ENCODE measurements at regions of chr4 and their contacts with region 1.

Region 1: GRCh38 chr4:1346781-1347409 is at the start of gene UVSSA:
- DNase-seq: peak; percentile 100
- ATAC-seq: peak; percentile 98
- H3K4me3 ChIP-seq: peak within 1 kb of the TSS; percentile 77 to 83
- H3K27ac ChIP-seq: peak within 1 kb of the TSS; percentile 91 to 97
- H3K4me1 ChIP-seq: no peaks in the 10 kb centered on the region
- H3K27me3 ChIP-seq: no peaks in the 10 kb centered on the region
- total RNA-seq, gene UVSSA: 19.9 to 33.5 TPM

Region 2: DNA sequence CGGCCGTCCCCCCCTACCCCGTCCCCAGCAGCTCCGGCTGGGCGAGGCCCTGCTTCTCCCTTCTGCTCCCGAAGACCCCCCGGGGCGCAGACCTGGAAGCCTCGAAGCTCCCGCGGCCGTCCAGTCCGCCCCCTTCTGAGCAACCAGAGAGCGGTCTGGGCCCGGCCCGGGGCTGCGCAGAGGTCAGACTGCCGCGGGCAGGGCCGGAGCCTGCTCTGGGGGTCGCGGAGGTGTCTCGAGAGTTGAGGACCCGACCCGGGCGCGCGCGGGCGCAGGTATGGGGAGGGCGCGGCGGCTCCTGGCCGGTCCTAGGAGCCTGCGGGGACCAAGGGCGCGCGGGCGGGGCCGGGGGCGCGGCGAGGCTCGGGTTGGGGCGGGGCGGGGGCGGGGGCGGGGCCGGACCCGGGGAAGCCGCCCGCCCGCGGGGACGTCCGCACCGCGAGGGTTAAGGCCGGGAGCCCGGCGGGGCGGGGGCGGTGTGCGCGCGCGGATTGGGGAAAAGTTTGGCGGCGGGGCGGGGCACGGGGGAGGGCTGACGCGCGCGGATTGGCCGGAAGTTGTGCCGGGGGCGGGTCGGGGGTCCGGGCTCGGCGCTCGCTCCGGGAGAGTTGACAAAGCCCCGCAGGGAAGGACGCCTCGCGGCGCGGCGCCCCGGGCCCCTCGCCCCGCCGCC is 335.7 kb before region 1 on chr4 and contains the start of gene FGFRL1:
- intact Hi-C with region 1: loop called in 1 of 2 experiments (anchors 2 kb)
- DNase-seq: peak; percentile 96 to 99
- ATAC-seq: peak; percentile 75
- H3K4me3 ChIP-seq: peak within 1 kb of the TSS; percentile 56 to 88
- H3K27ac ChIP-seq: peak within 1 kb of the TSS in 1 of 2 donors; percentile 6
- H3K4me1 ChIP-seq: no peaks in the 10 kb centered on the region
- H3K27me3 ChIP-seq: no peaks in the 10 kb centered on the region
- total RNA-seq, gene FGFRL1: 28.9 to 32.9 TPM

Region 3: GRCh38 chr4:1167247-1167949 is 179.5 kb before region 1 on chr4:
- intact Hi-C with region 1: loop called (anchors 10 kb)
- DNase-seq: peak; percentile 87 to 95
- ATAC-seq: peak; percentile 90
- H3K4me3 ChIP-seq: peak overlapping the region; percentile 17 to 45
- H3K27ac ChIP-seq: no peak overlapping the region
- H3K4me1 ChIP-seq: no peaks in the 10 kb centered on the region
- H3K27me3 ChIP-seq: no peaks in the 10 kb centered on the region

Region 4: GRCh38 chr4:1249148-1249730 is 97.7 kb before region 1 on chr4:
- intact Hi-C with region 1: loop called (anchors 1 to 2 kb)
- DNase-seq: peak; percentile 92 to 95
- ATAC-seq: peak; percentile 85
- H3K4me3 ChIP-seq: peak overlapping the region; percentile 74 to 86
- H3K27ac ChIP-seq: peak overlapping the region; percentile 76 to 84
- H3K4me1 ChIP-seq: peaks cover 0 to 3% of the 10 kb centered on the region in 2 donors
- H3K27me3 ChIP-seq: no peaks in the 10 kb centered on the region

Region 5: GRCh38 chr4:1289207-1290164 is 57.4 kb before region 1 on chr4 and contains the start of gene MAEA:
- intact Hi-C with region 1: loop called (anchors 2 to 5 kb)
- DNase-seq: peak; percentile 98 to 99
- ATAC-seq: peak; percentile 99
- H3K4me3 ChIP-seq: peak within 1 kb of the TSS; percentile 79 to 84
- H3K27ac ChIP-seq: peak within 1 kb of the TSS in 1 of 2 donors; percentile 32
- H3K4me1 ChIP-seq: peaks cover 0 to 3% of the 10 kb centered on the region in 2 donors
- H3K27me3 ChIP-seq: no peaks in the 10 kb centered on the region
- total RNA-seq, gene MAEA: 49.8 to 61.3 TPM

Region 6: GRCh38 chr4:1309261-1310010 is 37.5 kb before region 1 on chr4:
- intact Hi-C with region 1: loop called in 1 of 2 experiments (anchors 5 kb)
- DNase-seq: peak; percentile 94 to 96
- ATAC-seq: peak; percentile 96
- H3K4me3 ChIP-seq: peak overlapping the region in 1 of 2 donors; percentile 2
- H3K27ac ChIP-seq: peak overlapping the region in 1 of 2 donors; percentile 34
- H3K4me1 ChIP-seq: no peaks in the 10 kb centered on the region
- H3K27me3 ChIP-seq: no peaks in the 10 kb centered on the region

Measured in aorta (tissue), 5 donors.